B cell (primary cell): ENCODE measurements at regions of chr11 and their contacts with region 1.

Region 1: DNA sequence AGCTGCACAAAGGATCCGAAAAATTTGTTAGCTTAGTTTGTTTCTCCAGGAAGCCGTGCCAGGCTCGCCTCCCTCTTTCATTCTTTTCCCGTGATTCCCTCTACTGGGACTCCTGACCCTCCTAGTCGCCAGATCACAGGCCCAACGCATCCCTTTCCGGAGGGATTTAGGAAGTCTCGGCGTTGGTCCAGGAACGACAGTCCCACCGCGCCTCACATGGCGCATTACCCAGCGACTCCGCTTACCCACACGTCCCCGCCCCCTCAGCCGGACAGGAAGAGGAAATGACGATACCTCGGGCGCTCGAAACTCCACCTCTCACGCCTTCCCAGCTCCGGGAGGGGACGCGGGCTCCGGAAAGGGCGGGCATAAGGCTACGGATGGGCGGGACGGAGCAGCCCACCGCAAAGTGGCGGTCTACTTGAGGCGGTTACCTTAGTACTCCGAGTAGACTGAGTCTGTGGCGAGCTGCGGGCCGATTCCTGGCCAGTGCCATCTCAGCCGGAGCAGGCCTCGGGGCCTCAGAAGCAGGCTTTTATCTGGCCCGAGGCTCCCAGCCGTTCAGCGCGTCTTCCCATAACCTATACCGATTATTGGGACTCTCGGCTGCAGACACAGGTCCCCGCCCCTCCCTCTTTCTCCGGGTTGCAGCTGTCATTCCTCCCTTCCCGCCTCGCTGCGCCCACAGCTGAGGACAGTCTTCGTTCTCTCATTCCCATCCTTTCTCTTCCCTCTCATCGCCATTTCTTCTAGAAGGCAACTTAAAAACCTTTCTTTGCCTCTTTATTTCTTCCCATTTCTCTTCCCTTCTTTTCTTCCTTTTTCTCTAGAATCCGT is at the start of gene CCDC15:
- DNase-seq: peak; percentile 95
- ATAC-seq: peak; percentile 99
- H3K4me3 ChIP-seq: peak within 1 kb of the TSS; percentile 62 to 85 (median 81)
- H3K4me3 Mint-ChIP-seq: no peak within 1 kb of the TSS
- H3K27ac ChIP-seq: peak within 1 kb of the TSS; percentile 45 to 78
- H3K27ac Mint-ChIP-seq: no peak within 1 kb of the TSS
- H3K4me1 ChIP-seq: peaks cover 11 to 15% of the 10 kb centered on the region in 2 donors
- H3K4me1 Mint-ChIP-seq: no peaks in the 10 kb centered on the region
- H3K27me3 ChIP-seq: peaks cover 0 to 2% (median 0%) of the 10 kb centered on the region in 4 experiments
- H3K27me3 Mint-ChIP-seq: no peaks in the 10 kb centered on the region
- CTCF ChIP-seq: no peak
- total RNA-seq, gene CCDC15: 1.8 TPM in 2 replicates

Region 2: GRCh38 chr11:124622531-124623451 is 331.2 kb before region 1 on chr11 and contains the start of gene TBRG1:
- CTCF ChIA-PET with region 1: no interaction called
- POLR2A ChIA-PET with region 1: interaction called, 3 read pairs
- intact Hi-C with region 1: loop called (anchors 5 kb)
- DNase-seq: peak; percentile 89
- ATAC-seq: peak; percentile 97
- H3K4me3 ChIP-seq: peak within 1 kb of the TSS; percentile 75 to 98 (median 91)
- H3K4me3 Mint-ChIP-seq: peak within 1 kb of the TSS; percentile 99
- H3K27ac ChIP-seq: peak within 1 kb of the TSS; percentile 71 to 95
- H3K27ac Mint-ChIP-seq: peak within 1 kb of the TSS; percentile 97
- H3K4me1 ChIP-seq: peaks cover 15 to 17% of the 10 kb centered on the region in 2 donors
- H3K4me1 Mint-ChIP-seq: peaks cover 31% of the 10 kb centered on the region
- H3K27me3 ChIP-seq: peaks cover 0 to 13% (median 3%) of the 10 kb centered on the region in 4 experiments
- H3K27me3 Mint-ChIP-seq: peaks cover 24% of the 10 kb centered on the region
- CTCF ChIP-seq: no peak
- total RNA-seq, gene TBRG1: 66.8 and 71.5 TPM in 2 replicates

Region 3: GRCh38 chr11:124875943-124876817 is 77.8 kb before region 1 on chr11:
- CTCF ChIA-PET with region 1: interaction called, 9 read pairs
- POLR2A ChIA-PET with region 1: interaction called, 4 read pairs
- intact Hi-C with region 1: loop called (anchors 5 kb)
- DNase-seq: peak; percentile 86
- ATAC-seq: peak; percentile 89
- H3K4me3 ChIP-seq: peak overlapping the region in 4 of 5 experiments; percentile 50 to 77 (median 64)
- H3K4me3 Mint-ChIP-seq: peak overlapping the region; percentile 90
- H3K27ac ChIP-seq: peak overlapping the region in 1 of 2 donors; percentile 36
- H3K27ac Mint-ChIP-seq: peak overlapping the region; percentile 37
- H3K4me1 ChIP-seq: peaks cover 19 to 22% of the 10 kb centered on the region in 2 donors
- H3K4me1 Mint-ChIP-seq: peaks cover 24% of the 10 kb centered on the region
- H3K27me3 ChIP-seq: peaks cover 0 to 68% (median 20%) of the 10 kb centered on the region in 4 experiments
- H3K27me3 Mint-ChIP-seq: peaks cover 80% of the 10 kb centered on the region
- CTCF ChIP-seq: peak; percentile 81

Region 4: GRCh38 chr11:125111343-125112207 is 157.6 kb after region 1 on chr11 and contains the start of gene TMEM218:
- CTCF ChIA-PET with region 1: interaction called, 5 read pairs
- POLR2A ChIA-PET with region 1: interaction called, 16 read pairs
- intact Hi-C with region 1: loop called (anchors 1 kb)
- DNase-seq: peak; percentile 100
- ATAC-seq: peak; percentile 95
- H3K4me3 ChIP-seq: peak within 1 kb of the TSS; percentile 66 to 94 (median 80)
- H3K4me3 Mint-ChIP-seq: peak within 1 kb of the TSS; percentile 98
- H3K27ac ChIP-seq: peak within 1 kb of the TSS; percentile 79
- H3K27ac Mint-ChIP-seq: peak within 1 kb of the TSS; percentile 99
- H3K4me1 ChIP-seq: peaks cover 8 to 14% of the 10 kb centered on the region in 2 donors
- H3K4me1 Mint-ChIP-seq: peaks cover 20% of the 10 kb centered on the region
- H3K27me3 ChIP-seq: peaks cover 0 to 2% (median under 1%) of the 10 kb centered on the region in 4 experiments
- H3K27me3 Mint-ChIP-seq: peaks cover under 1% of the 10 kb centered on the region
- CTCF ChIP-seq: no peak
- total RNA-seq, gene TMEM218: 20.7 TPM in 2 replicates

Region 5: DNA sequence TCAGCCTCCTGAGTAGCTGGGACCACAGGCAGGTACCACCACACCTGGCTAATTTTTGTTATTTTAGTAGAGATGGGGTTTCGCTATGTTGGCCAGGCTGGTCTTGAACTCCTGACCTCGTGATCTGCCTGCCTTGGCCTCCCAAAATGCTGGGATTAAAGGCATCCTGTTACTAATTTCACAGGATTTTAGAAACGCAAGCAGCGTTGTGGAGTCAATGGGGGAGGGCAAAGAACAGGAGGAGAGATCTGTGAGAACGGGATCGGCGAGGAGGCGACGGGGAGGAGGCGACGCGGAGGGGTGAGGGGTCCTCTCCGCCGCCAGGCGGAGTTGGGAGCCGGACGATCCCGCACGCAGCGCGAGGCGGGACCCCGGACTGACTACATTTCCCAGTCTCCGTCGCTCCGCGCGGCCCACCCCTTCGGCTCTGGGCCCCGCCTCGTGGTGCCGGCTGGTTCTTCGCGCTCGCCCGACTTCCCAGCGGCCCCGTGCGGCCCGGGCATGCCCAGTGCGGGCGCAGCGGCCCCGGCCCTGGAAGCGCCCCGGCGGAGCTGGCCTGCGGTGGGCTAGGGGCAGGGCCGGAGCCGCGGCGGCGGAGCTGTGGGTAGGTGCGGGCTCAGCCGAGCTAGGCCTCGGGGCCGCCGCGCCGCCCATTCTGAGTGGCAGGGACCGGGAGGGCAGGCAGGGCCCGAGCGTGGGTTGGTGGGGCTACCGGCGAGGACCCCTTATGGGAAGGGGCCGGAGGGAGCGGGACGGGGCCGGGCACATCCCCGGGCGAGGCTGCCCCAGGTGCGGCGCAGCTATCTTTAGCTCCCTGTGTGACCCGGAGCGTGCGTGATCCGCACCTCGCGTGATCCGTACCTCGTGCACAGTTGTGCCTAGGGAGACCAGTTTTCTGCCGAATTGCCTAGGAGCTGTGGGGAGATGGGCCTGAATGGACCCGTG is 615.3 kb after region 1 on chr11 and contains the start of gene EI24:
- CTCF ChIA-PET with region 1: no interaction called
- POLR2A ChIA-PET with region 1: no interaction called
- intact Hi-C with region 1: loop called (anchors 5 kb)
- DNase-seq: peak; percentile 93
- ATAC-seq: peak; percentile 99
- H3K4me3 ChIP-seq: peak within 1 kb of the TSS; percentile 68 to 91 (median 80)
- H3K4me3 Mint-ChIP-seq: peak within 1 kb of the TSS; percentile 96
- H3K27ac ChIP-seq: peak within 1 kb of the TSS; percentile 52 to 86
- H3K27ac Mint-ChIP-seq: peak within 1 kb of the TSS; percentile 91
- H3K4me1 ChIP-seq: peaks cover 11 to 16% of the 10 kb centered on the region in 2 donors
- H3K4me1 Mint-ChIP-seq: peaks cover 18% of the 10 kb centered on the region
- H3K27me3 ChIP-seq: no peaks in the 10 kb centered on the region
- H3K27me3 Mint-ChIP-seq: no peaks in the 10 kb centered on the region
- CTCF ChIP-seq: peak; percentile 68
- total RNA-seq, gene EI24: 20.2 and 21.9 TPM in 2 replicates

Region 6: GRCh38 chr11:125902927-125903710 is 949.1 kb after region 1 on chr11 and contains the start of gene PUS3:
- CTCF ChIA-PET with region 1: no interaction called
- POLR2A ChIA-PET with region 1: no interaction called
- intact Hi-C with region 1: loop called (anchors 5 kb)
- DNase-seq: peak; percentile 89
- ATAC-seq: peak; percentile 96
- H3K4me3 ChIP-seq: peak within 1 kb of the TSS; percentile 67 to 98 (median 81)
- H3K4me3 Mint-ChIP-seq: peak within 1 kb of the TSS; percentile 97
- H3K27ac ChIP-seq: peak within 1 kb of the TSS; percentile 45 to 75
- H3K27ac Mint-ChIP-seq: peak within 1 kb of the TSS; percentile 82
- H3K4me1 ChIP-seq: peaks cover 23 to 26% of the 10 kb centered on the region in 2 donors
- H3K4me1 Mint-ChIP-seq: peaks cover 24% of the 10 kb centered on the region
- H3K27me3 ChIP-seq: peaks cover 0 to 25% (median 18%) of the 10 kb centered on the region in 4 experiments
- H3K27me3 Mint-ChIP-seq: peaks cover 32% of the 10 kb centered on the region
- CTCF ChIP-seq: no peak
- total RNA-seq, gene PUS3: 7.8 and 8.1 TPM in 2 replicates